CD8-positive, alpha-beta T cell (primary cell): ENCODE measurements at regions of chr19 and their contacts with region 1.

Region 1: GRCh38 chr19:32580901-32581703 is at the start of gene PDCD5:
- DNase-seq: peak; percentile 96 to 98 (median 97)
- ATAC-seq: peak; percentile 93
- H3K4me3 ChIP-seq: peak within 1 kb of the TSS; percentile 66 to 87
- H3K4me3 Mint-ChIP-seq: peak within 1 kb of the TSS; percentile 95
- H3K27ac ChIP-seq: peak within 1 kb of the TSS; percentile 57 to 70
- H3K27ac Mint-ChIP-seq: peak within 1 kb of the TSS; percentile 93
- H3K4me1 ChIP-seq: peaks cover 21% of the 10 kb centered on the region
- H3K4me1 Mint-ChIP-seq: peaks cover 35% of the 10 kb centered on the region
- H3K27me3 ChIP-seq: peaks cover 0 to 3% of the 10 kb centered on the region in 2 experiments
- H3K27me3 Mint-ChIP-seq: no peaks in the 10 kb centered on the region
- CTCF ChIP-seq: no peak
- total RNA-seq, gene PDCD5: 24.9 to 26.6 TPM

Region 2: GRCh38 chr19:32345261-32346207 is 235.6 kb before region 1 on chr19 and contains the start of gene ZNF507:
- CTCF ChIA-PET with region 1: no interaction called
- POLR2A ChIA-PET with region 1: no interaction called
- intact Hi-C with region 1: loop called (anchors 2 kb)
- DNase-seq: peak; percentile 58 to 88 (median 80)
- ATAC-seq: peak; percentile 78
- H3K4me3 ChIP-seq: peak within 1 kb of the TSS; percentile 69 to 91
- H3K4me3 Mint-ChIP-seq: peak within 1 kb of the TSS; percentile 95
- H3K27ac ChIP-seq: peak within 1 kb of the TSS; percentile 68 to 75
- H3K27ac Mint-ChIP-seq: peak within 1 kb of the TSS; percentile 97
- H3K4me1 ChIP-seq: peaks cover 39% of the 10 kb centered on the region
- H3K4me1 Mint-ChIP-seq: peaks cover 42% of the 10 kb centered on the region
- H3K27me3 ChIP-seq: no peaks in the 10 kb centered on the region
- H3K27me3 Mint-ChIP-seq: no peaks in the 10 kb centered on the region
- CTCF ChIP-seq: no peak
- total RNA-seq, gene ZNF507: 28.4 to 29.6 TPM

Region 3: DNA sequence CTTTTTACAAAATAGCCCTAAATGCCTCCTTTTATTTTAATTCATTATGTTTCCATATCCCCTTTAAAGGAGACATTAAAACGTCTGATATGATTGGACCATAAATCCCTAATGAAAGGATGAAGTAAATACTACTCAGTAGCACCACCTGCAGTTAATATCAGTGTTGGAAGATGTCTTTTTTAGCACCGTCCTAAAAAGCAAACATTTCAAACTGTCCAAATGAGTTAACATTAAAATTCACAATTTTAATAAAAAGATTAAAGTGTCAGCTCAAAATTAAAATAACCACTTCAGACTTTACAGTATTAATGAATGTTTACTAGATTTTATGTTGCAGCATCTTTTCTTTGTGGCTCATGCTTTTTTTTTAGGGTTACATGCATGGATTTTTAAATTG is 223.4 kb before region 1 on chr19:
- CTCF ChIA-PET with region 1: no interaction called
- POLR2A ChIA-PET with region 1: no interaction called
- intact Hi-C with region 1: no loop called
- DNase-seq: no peak
- ATAC-seq: no peak
- H3K4me3 ChIP-seq: no peak overlapping the region
- H3K4me3 Mint-ChIP-seq: no peak overlapping the region
- H3K27ac ChIP-seq: no peak overlapping the region
- H3K27ac Mint-ChIP-seq: no peak overlapping the region
- H3K4me1 ChIP-seq: peaks cover 9% of the 10 kb centered on the region
- H3K4me1 Mint-ChIP-seq: peaks cover 75% of the 10 kb centered on the region
- H3K27me3 ChIP-seq: no peaks in the 10 kb centered on the region
- H3K27me3 Mint-ChIP-seq: no peaks in the 10 kb centered on the region
- CTCF ChIP-seq: no peak

Region 4: DNA sequence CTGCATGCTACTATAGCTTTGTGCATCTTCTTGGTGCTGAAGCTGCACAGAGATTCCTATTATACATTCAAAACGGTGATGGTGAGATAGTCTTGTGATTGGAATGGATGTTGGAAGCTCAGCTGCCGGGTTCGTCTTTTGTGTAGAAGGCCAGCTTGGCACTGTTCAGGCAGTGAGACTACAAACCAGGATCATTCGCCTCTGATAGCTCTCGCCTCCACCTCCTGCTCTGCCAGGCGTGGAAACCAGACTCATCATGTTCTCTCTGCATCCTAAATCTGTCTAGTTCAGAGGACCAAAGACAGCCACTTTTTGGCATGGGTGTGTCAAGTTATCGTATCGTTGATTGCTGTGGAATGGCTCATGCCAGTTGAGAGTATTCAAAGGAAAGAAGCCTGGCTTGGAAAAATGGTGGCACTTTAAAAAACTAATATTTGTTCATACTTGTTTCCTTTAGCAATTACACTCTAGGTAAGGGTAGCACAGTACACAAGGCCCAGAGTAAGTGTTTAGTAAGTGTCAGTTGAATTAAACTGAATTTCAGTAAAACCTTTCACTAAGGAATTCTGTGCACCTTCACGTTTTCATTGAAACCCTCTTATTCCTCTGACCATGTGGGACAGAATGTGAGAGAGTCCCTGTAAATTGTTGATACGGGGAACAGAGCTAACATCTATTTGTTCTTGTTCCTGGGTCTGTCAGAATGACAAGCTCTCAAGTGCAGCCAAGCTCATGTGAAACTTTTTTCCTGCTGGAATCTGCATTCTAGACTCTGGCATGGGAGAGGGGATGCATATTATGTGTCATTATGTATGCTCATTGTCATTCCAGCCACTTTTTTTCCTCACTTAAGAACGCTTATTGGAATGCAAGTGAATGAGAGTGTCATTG is 105.7 kb before region 1 on chr19:
- CTCF ChIA-PET with region 1: no interaction called
- POLR2A ChIA-PET with region 1: no interaction called
- intact Hi-C with region 1: no loop called
- DNase-seq: no peak
- ATAC-seq: no peak
- H3K4me3 ChIP-seq: no peak overlapping the region
- H3K4me3 Mint-ChIP-seq: no peak overlapping the region
- H3K27ac ChIP-seq: no peak overlapping the region
- H3K27ac Mint-ChIP-seq: no peak overlapping the region
- H3K4me1 ChIP-seq: no peaks in the 10 kb centered on the region
- H3K4me1 Mint-ChIP-seq: no peaks in the 10 kb centered on the region
- H3K27me3 ChIP-seq: no peaks in the 10 kb centered on the region
- H3K27me3 Mint-ChIP-seq: no peaks in the 10 kb centered on the region
- CTCF ChIP-seq: no peak

Region 5: DNA sequence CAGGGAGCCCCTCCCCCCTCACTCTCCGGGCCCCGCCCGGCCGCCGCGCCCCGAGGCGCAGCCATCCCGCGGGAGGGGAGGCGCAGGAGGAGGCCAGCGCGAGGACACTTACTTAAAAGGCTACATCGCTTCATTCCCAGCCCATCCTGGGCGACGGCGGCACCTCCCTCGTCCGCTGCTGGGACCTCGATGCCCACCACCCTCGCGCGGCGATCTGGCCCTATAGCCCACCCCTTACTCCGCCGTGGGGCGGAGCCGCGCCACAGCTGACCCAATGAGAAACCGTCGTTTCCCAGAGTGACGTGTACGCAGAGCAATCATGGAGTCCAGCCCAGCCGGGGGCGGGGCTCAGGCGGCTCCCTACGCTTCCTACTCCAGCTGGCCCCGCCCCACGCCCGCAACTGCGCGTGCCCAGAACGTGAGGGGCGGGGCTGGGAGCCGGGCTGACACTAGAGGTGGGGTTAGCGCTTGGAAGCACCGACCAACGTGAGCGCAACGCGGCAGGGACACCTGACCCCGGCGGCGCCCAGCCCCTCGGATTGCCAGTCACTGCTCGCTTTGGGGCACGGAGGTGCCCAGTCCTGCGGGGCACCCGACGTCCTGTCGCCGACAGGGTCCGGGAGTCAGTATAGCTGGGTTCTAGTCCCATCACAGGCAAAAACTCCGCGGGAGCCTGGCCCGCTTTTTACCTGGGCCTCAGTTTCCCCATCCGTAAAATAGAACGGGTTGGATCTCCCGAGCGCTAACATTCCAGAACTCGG is 94.0 kb after region 1 on chr19 and contains the start of gene ANKRD27:
- CTCF ChIA-PET with region 1: no interaction called
- POLR2A ChIA-PET with region 1: interaction called, 8 read pairs
- intact Hi-C with region 1: loop called (anchors 1 kb)
- DNase-seq: peak; percentile 95 to 99 (median 98)
- ATAC-seq: peak; percentile 94
- H3K4me3 ChIP-seq: peak within 1 kb of the TSS; percentile 93 to 99
- H3K4me3 Mint-ChIP-seq: peak within 1 kb of the TSS; percentile 94
- H3K27ac ChIP-seq: peak within 1 kb of the TSS; percentile 70 to 82
- H3K27ac Mint-ChIP-seq: peak within 1 kb of the TSS; percentile 80
- H3K4me1 ChIP-seq: peaks cover 32% of the 10 kb centered on the region
- H3K4me1 Mint-ChIP-seq: peaks cover 44% of the 10 kb centered on the region
- H3K27me3 ChIP-seq: peaks cover 0 to 6% of the 10 kb centered on the region in 2 experiments
- H3K27me3 Mint-ChIP-seq: peaks cover 11% of the 10 kb centered on the region
- CTCF ChIP-seq: no peak
- total RNA-seq, gene ANKRD27: 15.2 to 16.0 TPM

Region 6: GRCh38 chr19:33080761-33081681 is 499.9 kb after region 1 on chr19 and contains the start of gene GPATCH1:
- CTCF ChIA-PET with region 1: no interaction called
- POLR2A ChIA-PET with region 1: interaction called, 4 read pairs
- intact Hi-C with region 1: loop called in 1 of 2 experiments (anchors 5 kb)
- DNase-seq: peak; percentile 66 to 89 (median 81)
- ATAC-seq: peak; percentile 96
- H3K4me3 ChIP-seq: peak within 1 kb of the TSS; percentile 76 to 79
- H3K4me3 Mint-ChIP-seq: peak within 1 kb of the TSS; percentile 96
- H3K27ac ChIP-seq: peak within 1 kb of the TSS; percentile 62 to 80
- H3K27ac Mint-ChIP-seq: peak within 1 kb of the TSS; percentile 97
- H3K4me1 ChIP-seq: peaks cover 9% of the 10 kb centered on the region
- H3K4me1 Mint-ChIP-seq: peaks cover 30% of the 10 kb centered on the region
- H3K27me3 ChIP-seq: no peaks in the 10 kb centered on the region
- H3K27me3 Mint-ChIP-seq: no peaks in the 10 kb centered on the region
- CTCF ChIP-seq: no peak
- total RNA-seq, gene GPATCH1: 4.9 to 5.2 TPM

Region 7: DNA sequence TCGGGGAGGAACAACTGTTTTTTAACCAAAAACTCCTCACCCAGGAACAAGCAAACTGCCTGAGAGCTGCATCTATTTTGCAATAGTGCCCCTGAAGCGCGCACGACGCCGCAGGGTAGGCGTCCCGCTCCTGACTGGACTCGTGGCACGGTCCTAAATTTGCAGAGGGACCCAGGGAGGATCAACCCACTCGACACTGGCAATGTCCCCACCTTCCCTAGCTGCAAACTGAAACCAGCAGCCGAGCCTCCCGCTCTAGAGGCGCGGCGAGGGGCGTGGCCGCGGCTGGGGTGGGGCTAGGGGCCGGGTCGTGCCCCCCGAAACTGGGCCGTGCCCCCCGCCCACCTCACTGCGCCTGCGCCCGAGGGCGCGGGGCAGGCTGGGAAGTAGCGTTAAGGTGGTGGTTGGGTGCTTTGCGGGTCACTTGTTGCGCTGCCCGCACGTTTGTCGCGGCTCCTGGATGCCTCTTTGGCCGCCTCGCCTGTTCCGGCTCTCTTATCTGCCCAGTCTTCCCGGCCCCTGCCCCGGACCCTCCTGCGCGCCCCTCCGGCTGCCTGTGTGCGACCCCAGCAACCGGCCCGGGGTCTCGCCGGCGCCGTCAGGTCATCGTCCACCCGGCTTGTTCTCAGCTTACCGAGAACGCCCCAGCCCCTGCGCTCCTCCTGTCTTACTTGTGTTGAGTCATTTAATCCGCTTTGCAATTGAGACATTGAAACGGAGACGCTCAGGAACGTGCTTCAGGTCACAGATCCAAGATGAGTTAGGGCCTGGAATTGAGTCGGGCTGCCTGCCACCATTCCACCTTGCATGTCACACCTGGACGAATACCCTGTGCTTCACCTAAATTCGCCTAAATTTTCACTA is 1553.3 kb after region 1 on chr19:
- CTCF ChIA-PET with region 1: no interaction called
- POLR2A ChIA-PET with region 1: no interaction called
- intact Hi-C with region 1: loop called in 1 of 2 experiments (anchors 10 kb)
- DNase-seq: peak; percentile 80 to 97 (median 92)
- ATAC-seq: peak; percentile 99
- H3K4me3 ChIP-seq: peak overlapping the region; percentile 80 to 89
- H3K4me3 Mint-ChIP-seq: peak overlapping the region; percentile 90
- H3K27ac ChIP-seq: peak overlapping the region; percentile 72 to 81
- H3K27ac Mint-ChIP-seq: peak overlapping the region; percentile 90
- H3K4me1 ChIP-seq: peaks cover 7% of the 10 kb centered on the region
- H3K4me1 Mint-ChIP-seq: peaks cover 11% of the 10 kb centered on the region
- H3K27me3 ChIP-seq: no peaks in the 10 kb centered on the region
- H3K27me3 Mint-ChIP-seq: no peaks in the 10 kb centered on the region
- CTCF ChIP-seq: no peak